ENCODE measurements at regions of chr12 and their contacts with region 1.

Region 1: DNA sequence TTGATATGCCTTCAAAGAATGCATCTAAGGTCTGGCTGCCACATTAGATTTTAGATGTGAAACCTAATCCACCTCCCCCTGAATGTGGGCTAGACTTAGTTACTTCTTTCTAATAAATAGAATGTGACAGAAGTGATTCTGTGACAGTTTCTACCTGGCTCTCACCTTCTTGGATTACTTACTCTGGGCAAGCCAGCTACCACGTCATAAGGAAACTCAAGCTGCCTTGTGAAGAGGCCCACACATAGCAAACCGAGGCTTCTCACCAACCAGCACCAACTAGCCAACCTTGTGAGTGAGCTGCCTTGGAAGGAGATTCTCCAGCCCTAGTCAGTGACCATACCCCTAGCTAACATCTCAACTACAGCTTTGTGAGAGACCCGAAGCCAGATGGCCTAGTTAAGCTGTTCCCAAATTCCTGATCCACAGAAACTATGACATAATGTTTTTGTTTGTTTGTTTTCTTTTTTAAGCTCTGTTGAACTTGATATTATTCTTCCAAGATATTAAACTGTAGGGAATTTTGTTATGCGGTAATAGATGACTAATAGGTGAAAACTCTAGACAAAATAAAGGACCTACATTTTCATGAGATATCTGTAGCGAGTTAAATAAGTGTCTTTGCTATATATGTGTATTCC is 6.2 kb downstream of the GPR19 start:
- DNase-seq: no peak
- H3K4me3 Mint-ChIP-seq: no peak overlapping the region
- H3K27ac Mint-ChIP-seq: peak overlapping the region; percentile 3
- H3K4me1 Mint-ChIP-seq: peaks cover 44% of the 10 kb centered on the region
- H3K27me3 Mint-ChIP-seq: no peaks in the 10 kb centered on the region

Region 2: GRCh38 chr12:11916771-11917170 is 773.0 kb before region 1 on chr12:
- intact Hi-C with region 1: no loop called
- DNase-seq: no peak
- H3K4me3 Mint-ChIP-seq: no peak overlapping the region
- H3K27ac Mint-ChIP-seq: no peak overlapping the region
- H3K4me1 Mint-ChIP-seq: peaks cover 3% of the 10 kb centered on the region
- H3K27me3 Mint-ChIP-seq: peaks cover 23% of the 10 kb centered on the region

Region 3: DNA sequence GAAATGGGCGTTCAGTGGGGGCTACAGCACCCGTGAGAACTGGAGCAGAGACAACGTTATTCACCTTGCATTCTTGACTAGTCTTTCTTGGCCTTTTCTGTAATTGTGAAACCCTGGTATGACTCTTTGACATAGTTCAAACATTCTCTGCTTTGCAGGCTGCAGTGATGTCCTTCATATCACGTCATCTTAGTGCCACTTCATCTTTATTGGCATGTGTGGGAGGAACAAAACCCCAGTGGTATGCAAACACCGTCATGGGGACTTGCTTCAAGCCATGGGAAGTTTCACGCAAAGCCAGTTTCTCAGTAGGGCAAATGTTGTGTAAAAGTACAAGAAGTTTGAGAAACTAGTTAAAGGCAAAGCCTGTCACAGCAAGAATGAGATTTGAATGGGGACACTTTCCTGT is 106.9 kb before region 1 on chr12:
- intact Hi-C with region 1: no loop called
- DNase-seq: peak; percentile 19
- H3K4me3 Mint-ChIP-seq: no peak overlapping the region
- H3K27ac Mint-ChIP-seq: peak overlapping the region; percentile 86
- H3K4me1 Mint-ChIP-seq: peaks cover 57% of the 10 kb centered on the region
- H3K27me3 Mint-ChIP-seq: no peaks in the 10 kb centered on the region

Region 4: GRCh38 chr12:12673296-12673695 is 16.5 kb before region 1 on chr12:
- intact Hi-C with region 1: loop called (anchors 2 kb)
- DNase-seq: no peak
- H3K4me3 Mint-ChIP-seq: no peak overlapping the region
- H3K27ac Mint-ChIP-seq: peak overlapping the region; percentile 56
- H3K4me1 Mint-ChIP-seq: peaks cover 37% of the 10 kb centered on the region
- H3K27me3 Mint-ChIP-seq: no peaks in the 10 kb centered on the region